AG04449 (cell line): ENCODE measurements at regions of chr5 and their contacts with region 1.

Region 1: GRCh38 chr5:80672140-80672736 is 17.5 kb upstream of the DHFR start:
- DNase-seq: no peak
- H3K4me3 ChIP-seq: no peak overlapping the region
- CTCF ChIP-seq: peak; percentile 78

Region 2: DNA sequence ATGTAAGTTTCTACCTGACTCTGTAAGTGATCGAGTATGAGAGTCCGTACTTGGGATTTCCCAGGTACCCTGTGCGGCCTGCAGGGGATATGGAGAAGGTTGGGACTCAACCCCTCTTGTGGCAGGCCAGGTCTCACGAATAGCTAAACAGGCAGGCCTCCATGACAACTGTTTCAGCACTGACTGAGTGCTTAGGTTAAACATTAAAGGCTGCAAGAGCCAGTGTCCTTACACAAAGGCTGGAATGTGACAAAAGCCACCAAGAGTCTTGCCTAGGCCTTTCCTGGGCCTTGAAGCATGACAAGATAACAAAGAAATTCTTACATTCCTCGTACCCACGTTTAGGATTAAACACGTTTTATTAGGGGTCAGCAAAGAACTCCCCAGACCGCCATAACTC is 578.4 kb before region 1 on chr5:
- CTCF ChIA-PET with region 1: interaction called, 11 read pairs
- POLR2A ChIA-PET with region 1: no interaction called
- DNase-seq: no peak
- H3K4me3 ChIP-seq: no peak overlapping the region
- CTCF ChIP-seq: no peak

Region 3: DNA sequence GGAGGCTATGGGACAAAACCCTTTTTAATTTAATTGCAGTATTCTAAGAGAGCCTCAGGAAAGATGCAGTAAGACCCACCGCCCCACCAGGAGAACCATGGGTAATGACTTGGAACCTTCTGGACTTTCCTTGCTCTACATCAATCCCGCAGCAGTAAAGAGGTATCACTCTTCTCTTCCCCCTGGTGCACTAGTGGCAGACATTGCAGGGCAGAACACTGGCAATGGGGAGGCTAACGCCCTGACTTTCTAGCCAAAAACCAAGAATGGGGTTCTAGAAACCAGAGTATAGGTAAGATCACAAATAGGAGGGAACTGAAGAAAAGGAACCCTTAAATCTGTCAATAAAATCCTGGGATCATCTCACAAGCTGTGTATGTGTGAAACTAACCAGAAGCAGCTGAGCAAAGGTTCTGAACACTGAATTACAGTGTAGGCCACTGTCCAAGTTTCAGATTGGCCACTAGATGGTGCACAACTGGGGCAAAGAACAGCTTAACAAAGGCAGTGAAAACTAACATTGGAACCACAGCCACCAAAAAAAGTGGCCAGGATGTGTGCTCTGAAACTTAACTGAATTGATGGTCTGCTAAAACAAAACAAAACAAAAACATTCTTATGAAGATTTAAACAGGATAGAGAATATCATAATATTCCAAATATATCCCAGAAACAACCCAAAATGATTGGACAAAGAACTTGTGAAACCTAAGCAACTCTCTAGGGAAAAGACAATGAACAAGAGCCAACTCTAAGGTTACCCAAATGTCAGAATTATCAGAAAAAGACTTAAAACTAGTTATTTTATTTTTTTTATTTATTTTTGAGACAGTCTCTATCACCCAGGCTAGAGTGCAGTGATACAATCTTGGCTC is 191.0 kb before region 1 on chr5:
- CTCF ChIA-PET with region 1: interaction called, 90 read pairs
- POLR2A ChIA-PET with region 1: no interaction called
- DNase-seq: no peak
- H3K4me3 ChIP-seq: no peak overlapping the region
- CTCF ChIP-seq: peak; percentile 82

Region 4: DNA sequence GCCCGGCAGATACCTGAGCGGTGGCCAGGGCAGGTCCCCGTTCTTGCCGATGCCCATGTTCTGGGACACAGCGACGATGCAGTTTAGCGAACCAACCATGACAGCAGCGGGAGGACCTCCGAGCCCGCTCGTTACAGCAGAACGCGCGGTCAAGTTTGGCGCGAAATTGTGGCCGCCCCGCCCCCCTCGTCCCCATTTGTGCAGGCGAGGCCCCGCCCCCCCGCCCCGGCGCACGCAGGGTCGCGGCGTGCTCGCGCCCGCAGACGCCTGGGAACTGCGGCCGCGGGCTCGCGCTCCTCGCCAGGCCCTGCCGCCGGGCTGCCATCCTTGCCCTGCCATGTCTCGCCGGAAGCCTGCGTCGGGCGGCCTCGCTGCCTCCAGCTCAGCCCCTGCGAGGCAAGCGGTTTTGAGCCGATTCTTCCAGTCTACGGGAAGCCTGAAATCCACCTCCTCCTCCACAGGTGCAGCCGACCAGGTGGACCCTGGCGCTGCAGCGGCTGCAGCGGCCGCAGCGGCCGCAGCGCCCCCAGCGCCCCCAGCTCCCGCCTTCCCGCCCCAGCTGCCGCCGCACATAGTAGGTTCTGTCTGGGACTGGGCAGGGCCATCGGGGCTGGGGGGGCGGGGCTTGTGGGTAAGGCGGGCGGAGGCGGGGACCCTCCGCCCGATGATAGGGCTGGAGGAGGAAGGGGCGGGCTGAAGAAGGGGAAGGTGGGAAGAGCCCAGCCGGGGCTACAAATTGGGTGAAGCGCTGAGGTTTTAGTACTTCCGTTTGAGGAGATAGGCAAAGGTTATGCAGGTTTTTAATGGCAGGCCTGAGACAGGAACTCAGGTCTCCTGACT is 17.6 kb before region 1 on chr5 and contains the starts of genes DHFR and MSH3:
- CTCF ChIA-PET with region 1: interaction called, 22 read pairs
- POLR2A ChIA-PET with region 1: interaction called, 3 read pairs
- DNase-seq: peak; percentile 38
- H3K4me3 ChIP-seq: peak within 1 kb of the TSS; percentile 88
- CTCF ChIP-seq: no peak

Region 5: GRCh38 chr5:80662108-80662507 is 10.1 kb before region 1 on chr5:
- CTCF ChIA-PET with region 1: interaction called, 22 read pairs
- POLR2A ChIA-PET with region 1: no interaction called
- DNase-seq: no peak
- H3K4me3 ChIP-seq: no peak overlapping the region
- CTCF ChIP-seq: no peak

Region 6: DNA sequence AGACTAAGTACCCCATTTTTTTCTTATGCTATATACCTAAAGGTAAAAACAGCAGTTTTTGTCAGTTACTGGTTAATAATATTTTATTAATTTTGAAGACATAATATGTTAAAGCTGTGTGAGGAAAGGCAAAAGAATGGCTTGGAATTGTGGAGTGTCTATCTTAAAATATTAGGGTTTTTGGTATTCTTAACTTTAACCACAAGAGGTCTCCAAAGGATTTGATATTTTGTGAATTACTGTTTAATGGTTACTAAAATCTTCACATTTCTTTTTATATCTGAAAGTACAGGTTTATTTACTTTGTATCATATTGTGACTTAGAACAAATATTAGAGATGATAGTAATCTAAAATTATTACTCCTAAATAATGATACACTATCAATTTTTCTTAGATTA is 14.5 kb after region 1 on chr5:
- CTCF ChIA-PET with region 1: interaction called, 21 read pairs
- POLR2A ChIA-PET with region 1: no interaction called
- DNase-seq: no peak
- H3K4me3 ChIP-seq: no peak overlapping the region
- CTCF ChIP-seq: no peak